Adrenal gland (tissue), 19 donors: ENCODE measurements at regions of chr17 and their contacts with region 1.

Region 1: DNA sequence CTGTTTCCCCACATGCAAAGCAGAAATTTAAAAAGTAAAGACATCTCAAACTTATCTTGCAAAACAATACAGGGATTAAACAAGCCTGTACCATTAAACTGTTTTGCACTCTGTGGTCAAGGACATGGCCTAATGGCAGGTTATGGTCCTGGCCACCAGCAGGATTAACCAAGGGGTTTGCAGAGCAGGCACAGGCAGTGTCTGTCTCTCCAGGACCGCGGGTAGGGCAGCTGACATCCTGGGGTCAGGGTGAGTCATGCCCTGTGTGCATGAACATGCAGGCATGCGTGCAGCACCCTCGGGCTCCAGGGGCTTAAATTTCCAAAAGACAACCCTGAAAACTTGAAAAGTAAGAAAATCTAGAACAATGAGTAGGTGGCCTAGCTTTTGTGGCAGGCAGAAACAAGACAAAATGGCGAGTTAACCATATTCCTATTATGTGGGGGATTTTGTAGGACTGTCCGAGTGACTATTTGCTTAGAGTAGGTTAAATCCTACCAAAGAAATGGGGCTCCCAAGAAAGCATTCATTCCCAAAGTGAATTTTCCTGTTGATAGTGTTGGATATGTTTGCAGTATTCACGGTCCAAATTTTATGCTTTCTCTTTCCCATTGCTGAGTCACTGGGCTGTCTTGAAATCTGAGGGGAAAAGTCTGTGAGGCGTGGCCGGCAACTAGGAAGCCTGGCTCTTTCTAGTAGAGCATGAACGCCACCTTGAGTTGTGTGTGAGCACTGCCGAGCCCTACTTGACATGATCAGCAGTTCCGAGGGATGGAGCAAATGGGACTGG is 158.4 kb upstream of the FAM20A start:
- DNase-seq: peak; percentile 86 to 98 (median 95)
- H3K4me3 ChIP-seq: peak overlapping the region in 2 of 4 donors; percentile 20 to 57
- H3K27ac ChIP-seq: peak overlapping the region; percentile 28 to 94 (median 89)
- H3K4me1 ChIP-seq: peaks cover 0 to 8% of the 10 kb centered on the region in 2 donors
- H3K27me3 ChIP-seq: no peaks in the 10 kb centered on the region
- CTCF ChIP-seq: peak; percentile 75 to 97 (median 94)
- POLR2A ChIP-seq: peak in 1 of 2 donors; percentile 44

Region 2: DNA sequence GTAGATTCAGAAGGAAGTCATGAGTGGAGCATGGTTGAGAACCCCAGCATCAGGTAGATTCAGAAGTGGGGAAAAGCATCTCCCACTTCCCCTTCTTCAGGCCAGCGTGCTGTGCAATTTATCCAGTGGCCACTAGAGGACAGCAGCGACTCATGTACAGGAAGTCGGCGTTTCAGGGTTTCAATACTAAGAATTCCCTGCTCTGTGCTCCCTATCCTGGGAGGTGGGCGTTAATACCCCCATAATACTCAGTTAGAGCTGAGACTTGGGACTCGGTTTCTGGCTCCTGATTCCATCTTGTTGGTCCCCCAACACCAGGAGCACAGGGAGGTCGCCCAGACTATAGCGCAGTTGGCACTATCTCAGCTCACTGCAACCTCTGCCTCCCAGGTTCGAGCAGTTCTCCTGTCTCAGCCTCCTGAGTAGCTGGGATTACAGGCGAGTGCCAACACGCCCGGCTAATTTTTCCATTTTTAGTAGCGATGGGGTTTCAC is 587.0 kb before region 1 on chr17:
- intact Hi-C with region 1: loop called in 1 of 2 experiments (anchors 10 kb)
- DNase-seq: peak; percentile 55 to 88 (median 75)
- H3K4me3 ChIP-seq: peak overlapping the region in 1 of 4 donors; percentile 6
- H3K27ac ChIP-seq: no peak overlapping the region
- H3K4me1 ChIP-seq: no peaks in the 10 kb centered on the region
- H3K27me3 ChIP-seq: no peaks in the 10 kb centered on the region
- CTCF ChIP-seq: peak; percentile 93 to 99 (median 96)
- POLR2A ChIP-seq: no peak

Region 3: GRCh38 chr17:68539548-68540467 is 219.7 kb before region 1 on chr17:
- intact Hi-C with region 1: loop called (anchors 5 to 10 kb)
- DNase-seq: no peak
- H3K4me3 ChIP-seq: no peak overlapping the region
- H3K27ac ChIP-seq: no peak overlapping the region
- H3K4me1 ChIP-seq: peaks cover 0 to 15% of the 10 kb centered on the region in 2 donors
- H3K27me3 ChIP-seq: no peaks in the 10 kb centered on the region
- CTCF ChIP-seq: peak in 2 of 6 experiments; percentile 8 to 20
- POLR2A ChIP-seq: no peak